IMR-90 (cell line): ENCODE measurements at regions of chr15 and their contacts with region 1.

Region 1: GRCh38 chr15:55676507-55676906 is 66.4 kb downstream of the PRTG start:
- DNase-seq: no peak
- ATAC-seq: no peak
- H3K4me3 ChIP-seq: no peak overlapping the region
- H3K27ac ChIP-seq: no peak overlapping the region
- H3K4me1 ChIP-seq: no peaks in the 10 kb centered on the region
- H3K27me3 ChIP-seq: no peaks in the 10 kb centered on the region
- CTCF ChIP-seq: no peak
- POLR2A ChIP-seq: no peak
- RAD21 ChIP-seq: no peak

Region 2: DNA sequence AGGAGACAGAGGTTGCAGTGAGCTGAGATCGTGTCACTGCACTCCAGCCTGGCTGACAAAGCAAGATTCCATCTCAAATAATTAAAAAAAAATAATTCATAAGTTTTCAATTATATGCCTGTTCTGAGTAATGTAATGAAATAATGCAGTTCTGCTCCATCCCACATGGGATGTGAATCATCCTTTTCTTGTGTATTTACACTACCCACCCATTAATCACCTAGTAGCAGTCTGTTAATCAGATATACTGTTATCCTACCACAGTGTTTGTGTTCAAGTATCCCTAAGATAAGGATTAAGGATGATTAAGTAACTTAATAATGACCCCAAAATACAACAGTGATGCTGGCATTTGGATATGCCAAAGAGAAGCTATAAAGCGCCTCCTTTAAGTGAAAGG is 318.7 kb before region 1 on chr15:
- CTCF ChIA-PET with region 1: no interaction called
- POLR2A ChIA-PET with region 1: no interaction called
- dilution Hi-C with region 1: no loop called
- in situ Hi-C with region 1: no loop called
- intact Hi-C with region 1: no loop called
- DNase-seq: peak; percentile 82
- ATAC-seq: peak; percentile 96
- H3K4me3 ChIP-seq: no peak overlapping the region
- H3K27ac ChIP-seq: no peak overlapping the region
- H3K4me1 ChIP-seq: peaks cover 5% of the 10 kb centered on the region
- H3K27me3 ChIP-seq: no peaks in the 10 kb centered on the region; the same call in 1 of the 2 replicates
- CTCF ChIP-seq: no peak
- POLR2A ChIP-seq: no peak
- RAD21 ChIP-seq: no peak

Region 3: DNA sequence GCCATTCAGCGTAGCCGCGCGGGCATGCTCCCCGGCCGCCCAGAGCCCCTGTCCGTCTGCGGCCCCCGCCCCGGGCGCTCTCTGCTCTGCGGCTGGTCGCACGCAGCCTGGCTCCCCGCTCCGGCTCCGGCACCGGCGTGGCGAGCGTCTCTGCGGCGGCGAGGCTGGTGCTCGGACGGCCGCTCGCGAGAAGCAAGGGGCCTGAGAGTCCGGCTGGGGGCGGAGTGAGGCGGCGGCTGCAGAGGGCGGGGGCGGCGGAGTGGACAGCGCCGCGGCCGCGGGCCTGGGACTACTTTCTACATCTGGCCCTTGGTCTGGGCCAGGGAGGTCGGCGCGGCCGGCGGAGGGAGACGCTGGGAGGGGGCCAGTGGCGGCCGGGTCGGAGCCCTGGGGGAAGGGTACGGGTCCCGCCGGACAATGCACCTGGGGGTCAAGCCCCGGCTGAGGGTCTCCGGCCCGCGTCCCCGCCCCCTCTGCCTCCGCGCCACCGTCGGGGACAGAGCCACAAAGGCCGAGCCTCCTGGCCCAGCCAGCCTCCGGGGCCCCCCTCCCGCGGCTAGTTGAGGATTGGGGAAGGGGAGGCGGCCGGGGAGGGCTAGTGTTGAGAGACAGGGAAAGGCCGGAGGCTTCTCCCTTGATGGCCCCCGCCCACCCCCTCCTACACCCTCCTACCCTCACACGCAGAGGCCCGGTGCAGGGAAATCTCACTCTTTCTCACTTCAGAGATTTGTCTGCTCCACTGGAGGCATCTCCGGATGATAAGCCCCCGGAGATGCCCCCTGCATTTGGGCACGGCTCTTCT is 66.6 kb after region 1 on chr15 and contains the start of gene PRTG:
- CTCF ChIA-PET with region 1: no interaction called
- POLR2A ChIA-PET with region 1: no interaction called
- dilution Hi-C with region 1: no loop called
- in situ Hi-C with region 1: no loop called
- intact Hi-C with region 1: loop called (anchors 5 kb)
- DNase-seq: peak; percentile 69
- ATAC-seq: peak; percentile 97
- H3K4me3 ChIP-seq: peak within 1 kb of the TSS; percentile 71
- H3K27ac ChIP-seq: no peak within 1 kb of the TSS; the same call in 1 of the 2 replicates
- H3K4me1 ChIP-seq: peaks cover 3% of the 10 kb centered on the region; the same call in 1 of the 2 replicates
- H3K27me3 ChIP-seq: peaks cover 10% of the 10 kb centered on the region
- CTCF ChIP-seq: no peak
- POLR2A ChIP-seq: no peak
- RAD21 ChIP-seq: no peak
- total RNA-seq, gene PRTG: 1.4 and 1.7 TPM in 2 replicates

Region 4: DNA sequence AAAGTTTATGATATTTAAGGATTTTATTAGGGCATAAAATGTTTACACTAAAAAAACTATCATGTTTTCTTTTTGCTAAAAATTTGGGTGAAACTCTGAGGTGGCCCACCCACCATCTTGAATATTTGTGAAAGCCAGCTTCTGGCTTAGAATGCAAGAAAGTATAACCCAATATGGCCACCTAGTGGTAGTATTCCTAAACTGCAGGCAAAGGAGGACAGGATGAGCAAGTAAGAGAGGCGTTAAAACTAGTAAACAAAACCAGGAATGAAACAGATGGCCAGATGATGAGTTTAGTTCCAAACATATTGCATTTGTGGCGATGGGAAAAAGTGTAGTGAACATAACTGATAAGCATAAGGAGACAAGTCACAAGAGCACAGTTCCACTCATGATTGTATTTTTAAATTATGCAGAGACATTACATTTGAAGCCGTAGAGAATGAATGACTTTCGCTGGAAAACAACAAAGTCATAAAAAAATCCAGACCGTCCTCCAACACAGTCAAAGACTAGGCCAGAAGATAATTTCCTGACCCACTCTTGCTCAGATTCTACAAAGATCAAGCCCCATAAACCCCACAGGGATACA is 169.7 kb after region 1 on chr15:
- CTCF ChIA-PET with region 1: no interaction called
- POLR2A ChIA-PET with region 1: no interaction called
- dilution Hi-C with region 1: no loop called
- in situ Hi-C with region 1: no loop called
- intact Hi-C with region 1: no loop called
- DNase-seq: peak; percentile 88
- ATAC-seq: peak; percentile 97
- H3K4me3 ChIP-seq: no peak overlapping the region
- H3K27ac ChIP-seq: no peak overlapping the region
- H3K4me1 ChIP-seq: no peaks in the 10 kb centered on the region
- H3K27me3 ChIP-seq: no peaks in the 10 kb centered on the region
- CTCF ChIP-seq: peak; percentile 87
- POLR2A ChIP-seq: no peak
- RAD21 ChIP-seq: peak; percentile 68